HCT116 (cell line): ENCODE measurements at regions of chr3 and their contacts with region 1.

Region 1: DNA sequence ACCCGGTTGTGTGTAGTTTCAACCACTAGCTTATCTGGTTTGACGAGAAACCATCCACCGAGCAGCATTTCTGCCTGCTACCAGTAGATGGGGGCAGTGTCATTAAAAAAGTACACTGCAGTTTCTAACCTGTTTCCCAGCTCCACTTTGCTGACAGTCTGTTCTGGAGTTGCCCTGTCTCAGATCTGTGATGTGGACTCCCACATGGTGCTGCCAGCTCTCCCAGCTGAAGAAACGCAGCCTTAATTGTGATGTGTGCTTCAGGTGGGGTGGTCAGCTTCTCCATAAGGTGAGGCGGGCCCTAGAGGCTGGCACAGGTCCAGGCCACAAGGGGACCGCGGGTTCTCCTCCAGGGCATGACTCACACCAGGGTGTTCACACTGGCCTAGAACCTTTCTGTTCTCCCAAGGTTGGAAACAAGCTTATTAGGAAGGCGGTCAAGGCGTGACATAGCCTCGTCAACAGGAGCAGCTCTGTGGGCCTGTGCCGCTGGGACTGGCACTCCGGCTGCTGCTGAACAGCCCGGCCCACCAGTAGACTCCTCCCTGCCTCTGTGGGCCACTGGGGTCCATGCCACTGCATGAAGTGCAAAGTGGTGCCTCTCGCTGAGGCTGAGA is 2.9 kb upstream of the FAM43A start:
- DNase-seq: peak; percentile 88
- ATAC-seq: peak; percentile 78
- H3K4me3 ChIP-seq: peak overlapping the region; percentile 10 to 41; a peak in 2 of 4 replicates
- H3K27ac ChIP-seq: peak overlapping the region; percentile 20
- H3K4me1 ChIP-seq: peaks cover 16 to 29% of the 10 kb centered on the region in 2 experiments
- H3K27me3 ChIP-seq: no peaks in the 10 kb centered on the region
- CTCF ChIP-seq: peak; percentile 76 to 98 (median 92)
- POLR2A ChIP-seq: no peak
- RAD21 ChIP-seq: peak; percentile 99

Region 2: GRCh38 chr3:194671900-194672808 is 10.6 kb before region 1 on chr3 and contains the start of gene LSG1:
- CTCF ChIA-PET with region 1: interaction called, 62 read pairs
- POLR2A ChIA-PET with region 1: interaction called, 17 read pairs
- RAD21 ChIA-PET with region 1: interaction called, 11 to 13 read pairs
- intact Hi-C with region 1: no loop called
- DNase-seq: peak; percentile 95
- ATAC-seq: peak; percentile 93
- H3K4me3 ChIP-seq: peak within 1 kb of the TSS; percentile 89 to 95
- H3K27ac ChIP-seq: peak within 1 kb of the TSS; percentile 43
- H3K4me1 ChIP-seq: peaks cover 7 to 19% of the 10 kb centered on the region in 2 experiments; a peak in 3 of 4 replicates
- H3K27me3 ChIP-seq: no peaks in the 10 kb centered on the region; the same call in 1 of the 2 replicates
- CTCF ChIP-seq: no peak
- POLR2A ChIP-seq: peak; percentile 26
- RAD21 ChIP-seq: no peak
- total RNA-seq, gene LSG1: 39.7 TPM

Region 3: DNA sequence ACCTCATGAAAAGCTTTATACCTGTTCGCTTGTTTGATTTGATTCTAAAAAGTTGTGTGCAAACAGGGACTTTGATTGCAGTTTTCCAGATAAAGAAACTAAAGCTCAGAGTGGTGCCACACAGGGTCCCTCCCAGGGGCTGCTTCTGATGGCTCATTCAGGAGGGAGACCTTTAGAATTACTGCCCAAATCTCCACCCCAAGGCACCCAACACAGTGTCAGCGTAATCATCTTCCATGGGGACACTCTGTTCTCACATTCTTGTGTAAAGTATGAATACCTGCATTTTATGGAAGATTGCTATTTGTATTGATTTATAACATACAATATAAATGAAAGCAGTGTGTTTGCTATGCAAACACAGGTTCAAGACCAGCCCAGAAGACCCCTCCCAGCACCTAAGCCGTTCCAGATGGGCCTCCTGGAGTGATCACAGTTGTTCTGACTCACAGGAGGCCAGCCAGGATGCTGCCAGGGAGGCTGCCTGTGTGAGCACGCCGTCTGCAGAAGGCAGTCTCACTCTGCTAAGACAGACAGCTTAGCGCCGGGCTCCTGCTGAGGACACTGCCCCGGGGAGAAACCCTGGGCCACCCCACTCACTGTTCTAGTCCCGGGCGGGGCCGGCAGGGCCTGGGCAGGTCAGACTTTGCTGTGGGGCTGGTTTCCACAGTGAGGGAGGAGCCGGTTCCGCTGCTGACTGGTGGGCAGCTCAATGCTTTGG is 188.5 kb after region 1 on chr3:
- CTCF ChIA-PET with region 1: interaction called, 11 read pairs
- POLR2A ChIA-PET with region 1: interaction called, 4 read pairs
- RAD21 ChIA-PET with region 1: interaction called, 5 read pairs
- intact Hi-C with region 1: loop called (anchors 5 kb)
- DNase-seq: peak; percentile 60
- ATAC-seq: peak; percentile 83
- H3K4me3 ChIP-seq: peak overlapping the region; percentile 13 to 42; a peak in 3 of 4 replicates
- H3K27ac ChIP-seq: peak overlapping the region; percentile 36
- H3K4me1 ChIP-seq: peaks cover 37 to 41% of the 10 kb centered on the region in 2 experiments
- H3K27me3 ChIP-seq: no peaks in the 10 kb centered on the region
- CTCF ChIP-seq: no peak
- POLR2A ChIP-seq: no peak
- RAD21 ChIP-seq: peak; percentile 41; the same call in 1 of the 2 replicates

Region 4: DNA sequence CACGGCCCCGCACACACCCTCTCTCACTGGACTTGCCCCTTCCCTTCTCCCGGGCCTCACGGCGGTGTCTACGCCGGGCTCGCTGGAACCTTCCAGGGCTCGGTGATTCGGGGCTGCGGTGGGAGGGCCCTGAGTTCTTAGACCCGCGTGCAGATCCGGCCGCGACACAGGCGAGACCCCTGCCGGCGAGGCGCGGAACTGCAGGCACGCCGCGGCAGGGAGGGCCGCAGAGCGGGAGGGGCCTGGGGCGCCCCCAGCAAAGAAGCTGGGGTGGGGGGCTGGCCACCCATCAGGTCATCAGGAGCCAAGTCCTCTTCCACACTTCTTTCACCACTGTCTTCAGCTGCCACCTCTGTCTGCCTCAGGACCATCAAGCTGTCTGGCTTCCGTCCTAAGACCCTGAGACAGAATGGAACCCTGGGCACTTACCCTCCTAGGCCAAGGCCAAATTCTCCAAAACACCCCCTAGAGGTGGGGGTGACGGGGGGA is 423.7 kb after region 1 on chr3:
- CTCF ChIA-PET with region 1: interaction called, 21 read pairs
- POLR2A ChIA-PET with region 1: no interaction called
- RAD21 ChIA-PET with region 1: interaction called in 1 of 2 experiments, 6 read pairs
- intact Hi-C with region 1: loop called (anchors 1 kb)
- DNase-seq: no peak
- ATAC-seq: peak; percentile 89
- H3K4me3 ChIP-seq: peak overlapping the region in 1 of 2 experiments; percentile 25; a peak in 1 of 4 replicates
- H3K27ac ChIP-seq: no peak overlapping the region
- H3K4me1 ChIP-seq: peaks cover 10 to 38% of the 10 kb centered on the region in 2 experiments
- H3K27me3 ChIP-seq: no peaks in the 10 kb centered on the region
- CTCF ChIP-seq: peak; percentile 87 to 97 (median 93)
- POLR2A ChIP-seq: no peak
- RAD21 ChIP-seq: peak; percentile 96

Region 5: DNA sequence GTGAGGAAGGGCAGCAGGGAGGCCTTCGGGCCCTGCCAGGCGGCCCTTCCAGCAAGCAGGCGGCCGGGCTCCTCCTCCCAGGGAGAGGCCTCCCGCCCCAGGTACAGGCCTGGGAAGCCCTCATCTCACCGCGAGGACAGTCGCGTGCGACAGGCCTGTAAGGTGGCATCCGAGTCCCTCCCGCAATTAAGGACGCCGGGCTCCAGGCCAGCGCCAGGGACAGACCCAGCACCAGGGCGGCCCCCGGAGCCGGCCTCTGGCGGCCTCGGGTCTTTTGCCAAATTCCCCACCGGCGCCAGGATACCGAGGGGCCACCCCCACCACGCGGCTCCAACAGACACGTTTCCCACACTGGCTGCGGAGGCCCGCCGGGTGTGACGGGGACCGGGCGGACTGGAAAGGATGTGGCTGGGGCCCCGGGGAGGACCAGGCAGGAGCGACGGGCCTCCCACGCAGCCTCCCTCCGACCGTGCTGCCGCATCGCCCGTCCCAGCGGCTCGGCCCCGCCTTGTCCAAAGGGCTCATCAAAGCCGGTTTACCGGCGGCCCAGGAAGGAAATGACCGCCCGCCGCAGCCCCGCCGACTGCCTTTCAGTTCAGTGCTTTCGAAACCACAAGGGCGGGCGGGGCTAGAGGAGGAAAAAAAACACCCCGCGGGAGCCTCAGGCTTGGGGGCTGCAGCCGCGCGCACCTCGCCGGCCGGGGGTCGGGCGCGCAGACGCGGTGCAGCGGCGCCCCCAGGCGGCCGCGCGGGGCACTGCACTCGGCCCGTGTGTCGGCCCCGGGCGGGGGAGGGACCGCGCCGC is 576.9 kb after region 1 on chr3:
- CTCF ChIA-PET with region 1: interaction called, 13 read pairs
- POLR2A ChIA-PET with region 1: interaction called, 4 read pairs
- RAD21 ChIA-PET with region 1: interaction called, 5 to 6 read pairs
- intact Hi-C with region 1: loop called (anchors 1 kb)
- DNase-seq: peak; percentile 63
- ATAC-seq: peak; percentile 76
- H3K4me3 ChIP-seq: peak overlapping the region; percentile 51 to 66
- H3K27ac ChIP-seq: peak overlapping the region; percentile 92
- H3K4me1 ChIP-seq: peaks cover 19 to 28% of the 10 kb centered on the region in 2 experiments
- H3K27me3 ChIP-seq: no peaks in the 10 kb centered on the region
- CTCF ChIP-seq: peak in 2 of 3 experiments; percentile 28 to 37; a peak in 4 of 6 replicates
- POLR2A ChIP-seq: no peak
- RAD21 ChIP-seq: peak; percentile 51

Region 6: GRCh38 chr3:195522254-195523023 is 839.6 kb after region 1 on chr3:
- CTCF ChIA-PET with region 1: no interaction called
- POLR2A ChIA-PET with region 1: no interaction called
- RAD21 ChIA-PET with region 1: no interaction called
- intact Hi-C with region 1: loop called (anchors 5 kb)
- DNase-seq: no peak
- ATAC-seq: 0 out of 2 replicates have a peak, but pooled peaks have one; percentile 25
- H3K4me3 ChIP-seq: no peak overlapping the region
- H3K27ac ChIP-seq: no peak overlapping the region
- H3K4me1 ChIP-seq: no peaks in the 10 kb centered on the region
- H3K27me3 ChIP-seq: no peaks in the 10 kb centered on the region
- CTCF ChIP-seq: peak; percentile 35 to 96 (median 82); a peak in 5 of 6 replicates
- POLR2A ChIP-seq: no peak
- RAD21 ChIP-seq: peak; percentile 93